A549 (cell line): ENCODE measurements at regions of chr19 and their contacts with region 1.

Region 1: GRCh38 chr19:55301459-55302317 is 17.9 kb downstream of the BRSK1 start:
- DNase-seq: peak; percentile 82 to 100
- ATAC-seq: peak; percentile 72 to 88
- H3K4me3 ChIP-seq: peak overlapping the region; percentile 54
- H3K27ac ChIP-seq: peak overlapping the region; percentile 87 to 88
- H3K4me1 ChIP-seq: peaks cover 6% of the 10 kb centered on the region; the same call in 2 of the 3 replicates
- CTCF ChIP-seq: peak; percentile 99
- EP300 ChIP-seq: no peak
- POLR2A ChIP-seq: peak; percentile 56
- RAD21 ChIP-seq: peak; percentile 83 to 92

Region 2: GRCh38 chr19:55080968-55081772 is 220.5 kb before region 1 on chr19:
- CTCF ChIA-PET with region 1: no interaction called
- POLR2A ChIA-PET with region 1: no interaction called
- DNase-seq: peak; percentile 77 to 89
- ATAC-seq: peak; percentile 55 to 81
- H3K4me3 ChIP-seq: peak overlapping the region; percentile 43
- H3K27ac ChIP-seq: peak overlapping the region; percentile 78 to 87; a peak in 5 of 6 replicates
- H3K4me1 ChIP-seq: no peaks in the 10 kb centered on the region
- CTCF ChIP-seq: no peak
- EP300 ChIP-seq: no peak
- POLR2A ChIP-seq: 0 out of 2 replicates have a peak, but pooled peaks have one; percentile 21
- RAD21 ChIP-seq: no peak

Region 3: GRCh38 chr19:55279770-55280643 is 21.7 kb before region 1 on chr19 and contains the start of gene HSPBP1:
- CTCF ChIA-PET with region 1: interaction called, 152 read pairs
- POLR2A ChIA-PET with region 1: interaction called, 4 read pairs
- DNase-seq: peak; percentile 85 to 100
- ATAC-seq: peak; percentile 92 to 95
- H3K4me3 ChIP-seq: peak within 1 kb of the TSS; percentile 75
- H3K27ac ChIP-seq: peak within 1 kb of the TSS; percentile 80 to 92
- H3K4me1 ChIP-seq: peaks cover 33% of the 10 kb centered on the region
- CTCF ChIP-seq: no peak
- EP300 ChIP-seq: no peak
- POLR2A ChIP-seq: peak; percentile 67
- RAD21 ChIP-seq: no peak
- polyA plus RNA-seq, gene HSPBP1: 52.1 and 55.3 TPM in 2 replicates

Region 4: DNA sequence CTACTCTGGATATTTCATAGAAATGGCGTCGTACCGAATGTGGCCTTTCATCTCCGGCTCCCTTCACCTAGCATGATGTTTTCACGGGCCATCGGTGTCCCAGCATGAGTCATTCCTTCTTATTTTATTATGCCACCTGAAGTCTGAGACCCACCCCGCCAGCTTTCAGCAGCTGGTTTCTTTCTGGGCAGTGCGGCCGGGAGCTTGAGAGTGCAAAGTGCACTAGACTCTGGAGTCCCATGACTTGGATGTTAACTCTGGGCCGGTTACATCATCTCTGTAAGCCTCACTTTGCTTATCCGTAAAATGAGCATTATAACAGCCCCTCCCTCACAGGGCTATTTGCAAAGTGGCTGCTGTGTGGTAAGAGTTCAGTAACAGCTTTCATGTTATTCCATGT is 32.2 kb after region 1 on chr19:
- CTCF ChIA-PET with region 1: interaction called, 306 read pairs
- POLR2A ChIA-PET with region 1: interaction called, 11 read pairs
- DNase-seq: no peak
- ATAC-seq: no peak
- H3K4me3 ChIP-seq: no peak overlapping the region
- H3K27ac ChIP-seq: peak overlapping the region in 1 of 2 experiments; percentile 20; a peak in 3 of 6 replicates
- H3K4me1 ChIP-seq: peaks cover 10% of the 10 kb centered on the region
- CTCF ChIP-seq: no peak
- EP300 ChIP-seq: no peak
- POLR2A ChIP-seq: no peak
- RAD21 ChIP-seq: no peak

Region 5: DNA sequence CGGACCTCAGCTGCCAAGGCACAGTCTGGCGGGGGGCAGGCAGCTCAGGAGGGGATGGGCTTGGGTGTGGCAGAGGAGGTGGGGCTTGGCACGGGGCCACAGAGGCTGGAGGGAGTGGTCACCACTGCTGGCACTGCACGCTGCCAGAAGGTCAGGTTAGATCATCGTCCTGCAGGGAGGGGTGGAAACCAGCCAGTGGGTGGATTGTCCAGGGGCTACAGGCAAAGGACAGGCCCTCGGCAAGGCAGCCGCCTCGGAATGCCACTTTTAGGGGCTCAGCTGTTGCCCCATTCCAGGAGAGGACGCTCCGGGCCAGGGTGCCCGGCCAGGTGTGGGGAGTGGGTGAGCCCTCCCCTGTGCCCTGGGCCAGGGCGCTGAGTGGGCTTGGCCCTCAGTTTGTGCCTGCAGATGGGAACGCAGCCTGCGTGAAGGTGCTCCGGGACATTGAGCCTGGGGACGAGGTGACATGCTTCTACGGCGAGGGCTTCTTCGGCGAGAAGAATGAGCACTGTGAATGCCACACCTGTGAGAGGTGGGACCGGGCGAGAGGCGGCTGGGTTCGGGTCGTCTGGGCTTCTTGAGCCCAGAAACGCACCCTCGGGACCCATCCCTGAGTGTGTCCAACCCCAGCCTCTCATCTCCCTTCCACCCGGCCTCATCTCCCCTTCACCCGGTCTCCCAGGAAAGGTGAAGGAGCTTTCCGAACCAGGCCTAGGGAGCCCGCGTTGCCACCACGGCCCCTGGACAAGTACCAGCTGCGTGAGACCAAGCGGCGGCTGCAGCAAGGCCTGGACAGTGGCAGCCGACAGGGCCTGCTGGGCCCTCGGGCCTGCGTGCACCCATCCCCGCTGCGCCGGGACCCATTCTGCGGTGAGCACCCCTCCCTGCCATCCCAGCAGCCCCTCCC is 44.4 kb after region 1 on chr19:
- CTCF ChIA-PET with region 1: interaction called, 27 read pairs
- POLR2A ChIA-PET with region 1: no interaction called
- DNase-seq: peak in 1 of 2 experiments; percentile 72
- ATAC-seq: peak; percentile 5 to 31; a peak in 4 of 6 replicates
- H3K4me3 ChIP-seq: no peak overlapping the region
- H3K27ac ChIP-seq: peak overlapping the region in 1 of 2 experiments; percentile 61; a peak in 3 of 6 replicates
- H3K4me1 ChIP-seq: peaks cover 26% of the 10 kb centered on the region
- CTCF ChIP-seq: no peak
- EP300 ChIP-seq: no peak
- POLR2A ChIP-seq: no peak
- RAD21 ChIP-seq: no peak

Region 6: DNA sequence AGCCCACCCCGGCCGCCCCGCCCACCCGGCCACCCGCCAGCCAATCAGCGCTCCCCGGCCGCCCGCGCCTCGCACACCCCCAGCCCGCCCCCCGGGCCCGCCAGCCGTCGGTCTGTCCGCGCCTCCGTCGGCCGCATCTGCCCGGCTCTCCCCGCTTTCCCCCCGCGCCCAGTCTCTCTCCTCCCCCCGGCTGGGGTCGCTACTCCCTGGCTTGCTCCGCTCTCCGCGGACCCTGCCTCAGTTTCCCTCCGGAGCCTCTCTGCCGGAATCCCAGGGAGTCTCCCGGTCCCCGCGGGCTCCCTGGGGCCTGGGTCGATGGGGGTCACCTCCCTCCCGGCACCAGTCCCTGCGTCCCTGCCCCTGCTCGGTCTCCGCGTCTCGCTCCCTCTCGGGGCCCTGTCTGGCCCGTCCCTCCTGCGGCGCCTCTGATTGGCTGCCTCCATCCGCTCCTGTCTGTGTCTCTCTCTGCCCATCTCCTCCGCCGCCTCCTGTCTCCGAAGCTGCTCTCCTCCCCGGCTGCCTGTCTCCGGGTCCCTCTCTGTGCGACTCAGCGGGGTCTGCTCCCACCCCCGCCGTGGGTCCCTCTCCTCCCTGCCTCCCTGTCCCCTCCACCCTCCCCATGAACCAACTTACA is 68.1 kb after region 1 on chr19:
- CTCF ChIA-PET with region 1: interaction called, 105 read pairs
- POLR2A ChIA-PET with region 1: no interaction called
- DNase-seq: peak; percentile 86 to 98
- ATAC-seq: peak; percentile 45 to 71
- H3K4me3 ChIP-seq: peak overlapping the region; percentile 85
- H3K27ac ChIP-seq: peak overlapping the region; percentile 91 to 96
- H3K4me1 ChIP-seq: peaks cover 61% of the 10 kb centered on the region
- CTCF ChIP-seq: no peak
- EP300 ChIP-seq: no peak
- POLR2A ChIP-seq: no peak
- RAD21 ChIP-seq: no peak

Region 7: GRCh38 chr19:55385740-55386529 is 84.2 kb after region 1 on chr19 and contains the start of gene RPL28:
- CTCF ChIA-PET with region 1: interaction called, 56 read pairs
- POLR2A ChIA-PET with region 1: interaction called, 14 read pairs
- DNase-seq: peak; percentile 92 to 99
- ATAC-seq: peak; percentile 54 to 77
- H3K4me3 ChIP-seq: peak within 1 kb of the TSS; percentile 89
- H3K27ac ChIP-seq: peak within 1 kb of the TSS; percentile 91 to 99
- H3K4me1 ChIP-seq: peaks cover 50% of the 10 kb centered on the region
- CTCF ChIP-seq: no peak
- EP300 ChIP-seq: no peak
- POLR2A ChIP-seq: peak; percentile 100
- RAD21 ChIP-seq: no peak
- polyA plus RNA-seq, gene RPL28: 329 and 351 TPM in 2 replicates